ENCODE measurements at regions of chr9 and their contacts with region 1.

Region 1: GRCh38 chr9:113578882-113579282 is 115.4 kb downstream of the RGS3 start:
- DNase-seq: peak; percentile 86
- ATAC-seq: peak; percentile 64
- H3K4me3 Mint-ChIP-seq: peak overlapping the region; percentile 86
- H3K27ac Mint-ChIP-seq: peak overlapping the region; percentile 95
- H3K4me1 Mint-ChIP-seq: peaks cover 69% of the 10 kb centered on the region
- H3K27me3 Mint-ChIP-seq: no peaks in the 10 kb centered on the region

Region 2: DNA sequence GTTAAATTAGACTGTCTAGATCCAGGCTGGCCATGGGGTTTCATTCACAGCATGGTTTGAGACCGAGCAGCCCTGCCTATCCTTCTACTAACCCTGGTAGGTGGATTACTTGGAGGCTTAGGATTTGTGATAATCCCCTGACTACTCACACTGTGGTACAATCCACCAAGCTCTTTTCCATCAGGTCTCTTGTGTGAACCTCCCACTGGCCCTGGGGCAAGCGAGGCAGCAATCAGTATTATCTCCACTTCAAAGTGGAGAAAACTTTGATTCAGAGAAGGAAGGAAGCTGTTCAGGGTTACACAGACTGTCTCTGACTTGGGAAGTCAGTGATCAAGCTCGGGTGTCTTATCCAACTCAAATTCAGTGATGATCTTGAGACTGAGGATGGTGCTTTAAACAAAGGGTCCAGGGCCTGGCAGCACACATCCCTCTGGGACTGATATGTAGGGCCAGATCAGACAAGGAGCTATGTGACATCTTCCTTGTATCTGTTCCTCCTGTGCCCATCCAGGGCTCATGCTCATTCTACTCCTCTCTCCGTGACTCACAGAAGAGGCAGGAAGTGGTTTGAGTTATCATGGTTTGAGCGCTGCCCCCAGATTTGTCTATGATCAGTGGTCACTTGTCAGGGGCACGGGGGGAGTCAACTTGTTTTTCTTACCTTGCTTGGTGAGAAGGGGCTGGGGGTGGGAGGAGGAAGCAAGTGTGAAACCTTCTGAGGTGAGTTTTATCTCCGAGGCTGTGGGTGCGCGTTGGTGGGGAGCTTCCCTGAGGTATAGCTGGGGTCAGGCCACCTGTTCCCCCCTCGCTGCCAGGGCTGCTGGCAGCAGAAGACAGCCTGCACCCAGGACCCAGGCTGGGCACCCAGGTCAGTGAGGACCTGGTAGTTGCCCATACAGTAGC is 66.8 kb before region 1 on chr9:
- POLR2A ChIA-PET with region 1: interaction called, 97 read pairs
- DNase-seq: peak; percentile 75
- ATAC-seq: peak; percentile 73
- H3K4me3 Mint-ChIP-seq: peak overlapping the region; percentile 81
- H3K27ac Mint-ChIP-seq: peak overlapping the region; percentile 98
- H3K4me1 Mint-ChIP-seq: peaks cover 68% of the 10 kb centered on the region
- H3K27me3 Mint-ChIP-seq: no peaks in the 10 kb centered on the region

Region 3: DNA sequence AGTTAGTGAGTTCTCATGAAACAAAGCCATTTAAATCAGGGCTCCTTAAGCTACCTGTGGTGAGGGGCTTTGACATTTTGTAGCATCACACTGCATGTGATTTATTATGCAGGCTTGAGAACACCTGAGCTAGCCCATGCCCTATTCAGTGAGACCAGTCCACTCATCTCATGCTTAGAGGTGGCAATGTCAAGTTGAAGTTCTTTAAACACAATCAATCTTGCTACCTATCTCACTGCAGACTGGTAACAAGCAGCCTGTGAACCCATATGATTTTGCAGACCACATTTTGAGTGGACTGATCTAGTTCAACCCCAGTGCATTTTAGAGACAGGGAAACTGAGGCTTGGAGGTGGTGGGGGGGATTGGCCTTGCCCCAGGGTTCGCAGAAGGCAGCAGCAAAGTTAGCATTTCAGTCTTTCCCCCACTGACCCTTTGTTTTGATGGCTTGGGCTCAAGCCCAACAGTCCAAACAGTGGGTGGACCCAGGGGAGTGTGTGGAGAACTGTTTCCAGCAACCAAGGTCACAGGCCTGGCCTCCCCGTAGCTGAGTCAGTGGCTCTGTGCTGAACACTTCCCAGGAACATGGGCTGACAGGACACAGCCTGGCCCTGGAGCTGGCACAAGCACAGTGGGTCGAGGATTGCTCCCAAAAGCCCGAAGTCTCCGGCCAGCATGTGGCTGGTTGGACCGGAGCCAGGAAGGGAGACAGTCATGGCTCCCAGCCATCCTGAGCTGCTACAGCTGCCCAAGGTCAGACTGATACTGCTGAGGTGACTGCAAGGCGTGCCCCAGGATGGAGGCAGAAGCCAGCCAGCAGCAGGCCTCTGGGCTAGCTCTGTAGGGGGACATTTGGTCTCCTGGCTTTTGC is 20.0 kb before region 1 on chr9:
- POLR2A ChIA-PET with region 1: interaction called, 12 read pairs
- DNase-seq: no peak
- ATAC-seq: no peak
- H3K4me3 Mint-ChIP-seq: no peak overlapping the region
- H3K27ac Mint-ChIP-seq: peak overlapping the region; percentile 33
- H3K4me1 Mint-ChIP-seq: peaks cover 24% of the 10 kb centered on the region
- H3K27me3 Mint-ChIP-seq: no peaks in the 10 kb centered on the region

Measured in activated naive CD8-positive, alpha-beta T cell treated with anti-CD3 and anti-CD28 coated beads, Interleukin-2, amount 10 ng/mL, durations not matched to agents 7 days and 5 days (primary cell).